Activated CD8-positive, alpha-beta T cell treated with anti-CD3 and anti-CD28 coated beads for 36 hours (primary cell): ENCODE measurements at regions of chr20 and their contacts with region 1.

Region 1: DNA sequence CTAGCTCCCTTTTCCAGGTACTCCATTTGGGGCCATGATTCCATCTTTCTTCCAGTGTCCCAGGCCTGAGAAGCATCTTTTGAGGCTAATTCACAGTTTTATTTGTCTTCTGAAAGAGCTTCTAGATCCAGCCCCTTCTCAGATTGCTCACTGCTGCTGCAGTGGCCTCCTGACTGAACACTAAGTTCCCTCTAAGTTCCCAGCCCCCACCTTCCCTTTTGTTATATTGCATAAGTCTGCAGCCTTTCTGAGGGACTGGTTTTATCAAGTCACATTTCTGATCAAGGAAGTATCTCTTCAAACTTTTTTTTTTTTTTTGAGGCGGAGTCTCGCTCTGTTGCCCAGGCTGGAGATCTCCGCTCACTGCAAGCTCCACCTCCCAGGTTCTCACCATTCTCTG is 10.7 kb downstream of the MAPRE1 start:
- DNase-seq: no peak
- ATAC-seq: no peak
- H3K4me3 Mint-ChIP-seq: no peak overlapping the region
- H3K27ac Mint-ChIP-seq: peak overlapping the region; percentile 16
- H3K4me1 Mint-ChIP-seq: peaks cover 51% of the 10 kb centered on the region
- H3K27me3 Mint-ChIP-seq: no peaks in the 10 kb centered on the region
- CTCF ChIP-seq: no peak

Region 2: DNA sequence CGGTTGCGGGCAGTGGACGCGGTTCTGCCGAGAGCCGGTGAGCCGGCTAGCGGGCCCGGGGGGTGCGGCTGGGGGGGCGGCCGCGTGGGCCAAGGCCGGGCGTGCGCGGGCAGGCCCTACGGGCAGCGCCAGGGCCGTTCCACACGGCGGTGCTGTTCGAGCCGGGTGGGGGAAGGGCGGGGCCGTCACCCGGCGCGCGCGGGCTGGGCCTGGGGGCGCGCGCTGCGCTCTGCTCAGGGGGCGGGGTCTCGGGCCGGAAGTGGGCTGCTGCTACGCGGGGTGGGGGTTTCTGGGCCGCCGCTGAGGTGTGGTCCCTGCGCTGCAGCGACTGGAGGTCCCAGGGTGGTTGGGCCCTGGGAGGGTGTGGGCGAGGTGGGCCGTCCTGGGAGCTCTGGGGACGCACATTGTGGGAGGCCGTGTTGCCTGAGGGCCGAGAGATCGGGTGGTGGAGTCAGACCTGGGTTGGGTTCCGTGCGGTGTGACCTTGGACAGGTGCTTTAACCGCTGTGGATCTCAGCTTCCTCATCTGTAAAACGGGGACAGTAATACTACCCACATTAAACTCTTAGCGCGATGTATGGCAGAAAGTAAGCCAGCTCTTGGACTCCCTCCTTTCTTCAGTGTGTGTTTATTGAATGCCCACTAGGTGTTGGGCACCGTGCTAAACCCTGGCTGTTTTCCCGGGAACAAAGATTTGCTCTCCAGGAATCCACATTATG is 10.3 kb before region 1 on chr20:
- CTCF ChIA-PET with region 1: interaction called, 7 read pairs
- POLR2A ChIA-PET with region 1: interaction called, 17 read pairs
- intact Hi-C with region 1: no loop called
- DNase-seq: peak; percentile 83
- ATAC-seq: peak; percentile 82
- H3K4me3 Mint-ChIP-seq: peak overlapping the region; percentile 98
- H3K27ac Mint-ChIP-seq: peak overlapping the region; percentile 98
- H3K4me1 Mint-ChIP-seq: peaks cover 39% of the 10 kb centered on the region
- H3K27me3 Mint-ChIP-seq: no peaks in the 10 kb centered on the region
- CTCF ChIP-seq: no peak